ENCODE measurements at regions of chr6 and their contacts with region 1.

Region 1: DNA sequence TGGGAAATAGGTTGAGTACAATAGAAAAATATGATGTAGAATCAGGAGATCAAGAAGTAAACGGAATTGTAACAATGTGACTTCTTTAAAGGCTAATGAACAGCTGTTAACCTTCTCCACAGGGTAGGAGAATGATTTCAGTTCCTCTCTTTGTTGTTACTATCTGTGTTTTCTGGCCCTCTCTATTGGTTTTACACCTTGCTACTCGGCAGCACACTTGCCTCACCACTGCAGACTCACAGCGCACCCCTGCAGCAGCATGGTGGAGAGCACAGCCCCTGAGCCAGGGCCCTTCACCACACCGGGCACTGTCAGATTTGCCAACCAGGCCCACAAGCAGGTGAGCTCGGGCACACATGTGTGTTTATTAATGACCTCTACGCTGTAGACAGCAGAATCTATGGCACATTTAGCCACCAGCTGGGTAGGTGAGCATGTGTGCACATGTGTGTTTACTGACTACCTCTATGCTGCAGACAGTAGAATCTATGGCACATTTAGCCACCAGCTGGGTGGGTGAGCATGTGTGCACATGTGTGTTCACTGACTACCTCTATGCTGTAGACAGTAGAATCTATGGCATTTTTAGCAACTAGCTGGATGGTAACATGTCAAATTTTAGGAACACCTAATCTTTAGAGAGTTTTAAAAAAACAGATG is 16.8 kb downstream of the SFT2D1 start:
- DNase-seq: no peak
- ATAC-seq: no peak
- H3K4me3 Mint-ChIP-seq: no peak overlapping the region
- H3K27ac Mint-ChIP-seq: no peak overlapping the region
- H3K4me1 Mint-ChIP-seq: no peaks in the 10 kb centered on the region
- H3K27me3 Mint-ChIP-seq: no peaks in the 10 kb centered on the region

Region 2: GRCh38 chr6:166313255-166314070 is 12.1 kb before region 1 on chr6:
- CTCF ChIA-PET with region 1: interaction called, 18 read pairs
- POLR2A ChIA-PET with region 1: no interaction called
- DNase-seq: peak; percentile 67
- ATAC-seq: peak; percentile 96
- H3K4me3 Mint-ChIP-seq: no peak overlapping the region
- H3K27ac Mint-ChIP-seq: no peak overlapping the region
- H3K4me1 Mint-ChIP-seq: peaks cover 1% of the 10 kb centered on the region
- H3K27me3 Mint-ChIP-seq: peaks cover 33% of the 10 kb centered on the region

Measured in activated CD8-positive, alpha-beta T cell treated with anti-CD3 and anti-CD28 coated beads, Interleukin-2, amount 10 ng/mL, durations not matched to agents 7 days and 5 days (primary cell).